ENCODE measurements at regions of chr7 and their contacts with region 1.

Region 1: DNA sequence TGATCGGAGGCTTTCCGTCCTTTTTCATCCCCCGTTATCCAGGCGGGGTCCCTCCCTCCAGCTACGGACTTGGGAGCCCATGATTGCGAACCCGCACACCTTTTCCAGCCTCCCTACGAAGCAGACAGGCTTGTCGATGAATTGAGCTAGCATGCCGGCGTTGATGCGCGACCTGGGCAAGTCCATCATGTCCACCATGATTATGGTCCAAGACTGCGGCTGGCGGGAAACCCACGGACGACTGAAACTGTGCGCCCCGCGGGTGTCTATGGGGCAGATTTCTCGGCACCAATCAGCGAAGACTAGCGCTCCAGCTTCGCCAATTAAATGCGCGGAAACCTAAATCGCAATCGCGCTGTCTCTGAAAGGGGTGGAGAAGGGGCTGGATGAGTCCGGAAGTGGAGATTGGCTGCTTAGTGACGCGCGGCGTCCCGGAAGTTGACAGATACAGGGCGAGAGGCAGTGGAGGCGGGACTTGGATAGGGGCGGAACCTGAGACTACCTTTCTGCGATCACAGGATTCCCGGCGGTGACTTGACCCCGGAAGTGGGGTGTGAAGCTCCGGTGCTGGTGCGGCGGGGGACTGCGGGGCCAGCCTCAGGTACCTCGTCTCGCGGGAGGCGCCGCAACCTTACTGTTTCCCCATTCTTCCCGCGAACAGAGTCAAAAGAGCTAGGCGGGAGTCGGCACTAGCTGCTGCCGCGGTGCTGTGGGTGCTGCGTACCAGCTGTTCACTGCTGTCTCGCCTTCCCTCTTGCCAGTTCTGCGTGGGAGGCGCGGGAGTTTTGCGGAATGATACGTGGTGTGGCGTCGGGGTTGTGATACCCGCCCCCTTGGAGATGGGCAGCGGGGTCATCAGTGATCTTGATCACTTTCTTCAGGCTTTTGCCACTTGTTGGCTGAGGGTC is at the start of gene UMAD1:
- DNase-seq: peak; percentile 99
- H3K4me3 Mint-ChIP-seq: peak within 1 kb of the TSS; percentile 96
- H3K27ac Mint-ChIP-seq: peak within 1 kb of the TSS; percentile 97
- H3K4me1 Mint-ChIP-seq: peaks cover 21% of the 10 kb centered on the region
- H3K27me3 Mint-ChIP-seq: no peaks in the 10 kb centered on the region
- CTCF ChIP-seq: no peak
- total RNA-seq, gene UMAD1: 7.1 and 11.1 TPM in 2 replicates

Region 2: GRCh38 chr7:7554021-7554432 is 86.4 kb before region 1 on chr7:
- CTCF ChIA-PET with region 1: no interaction called
- POLR2A ChIA-PET with region 1: interaction called, 11 read pairs
- intact Hi-C with region 1: no loop called
- DNase-seq: peak; percentile 86
- H3K4me3 Mint-ChIP-seq: peak overlapping the region; percentile 58
- H3K27ac Mint-ChIP-seq: peak overlapping the region; percentile 98
- H3K4me1 Mint-ChIP-seq: peaks cover 44% of the 10 kb centered on the region
- H3K27me3 Mint-ChIP-seq: no peaks in the 10 kb centered on the region
- CTCF ChIP-seq: no peak

Region 3: GRCh38 chr7:7696458-7697119 is 56.1 kb after region 1 on chr7:
- CTCF ChIA-PET with region 1: no interaction called
- POLR2A ChIA-PET with region 1: interaction called, 10 read pairs
- intact Hi-C with region 1: no loop called
- DNase-seq: peak; percentile 27
- H3K4me3 Mint-ChIP-seq: peak overlapping the region; percentile 28
- H3K27ac Mint-ChIP-seq: peak overlapping the region; percentile 95
- H3K4me1 Mint-ChIP-seq: peaks cover 25% of the 10 kb centered on the region
- H3K27me3 Mint-ChIP-seq: no peaks in the 10 kb centered on the region
- CTCF ChIP-seq: no peak

Region 4: GRCh38 chr7:7761340-7761980 is 121.0 kb after region 1 on chr7:
- CTCF ChIA-PET with region 1: interaction called, 11 read pairs
- POLR2A ChIA-PET with region 1: interaction called, 37 read pairs
- intact Hi-C with region 1: loop called (anchors 1 kb)
- DNase-seq: peak; percentile 64
- H3K4me3 Mint-ChIP-seq: peak overlapping the region; percentile 87
- H3K27ac Mint-ChIP-seq: peak overlapping the region; percentile 95
- H3K4me1 Mint-ChIP-seq: peaks cover 33% of the 10 kb centered on the region
- H3K27me3 Mint-ChIP-seq: no peaks in the 10 kb centered on the region
- CTCF ChIP-seq: peak; percentile 30

Region 5: GRCh38 chr7:8056431-8056830 is 416.0 kb after region 1 on chr7:
- CTCF ChIA-PET with region 1: no interaction called
- POLR2A ChIA-PET with region 1: no interaction called
- intact Hi-C with region 1: no loop called
- DNase-seq: no peak
- H3K4me3 Mint-ChIP-seq: no peak overlapping the region
- H3K27ac Mint-ChIP-seq: no peak overlapping the region
- H3K4me1 Mint-ChIP-seq: no peaks in the 10 kb centered on the region
- H3K27me3 Mint-ChIP-seq: no peaks in the 10 kb centered on the region
- CTCF ChIP-seq: no peak

Measured in MCF 10A (cell line).